Brain microvascular endothelial cell (primary cell): ENCODE measurements at regions of chr5 and their contacts with region 1.

Region 1: GRCh38 chr5:78648359-78649210 is at the start of gene LHFPL2:
- DNase-seq: peak; percentile 57
- H3K4me3 ChIP-seq: peak within 1 kb of the TSS; percentile 93
- H3K27ac ChIP-seq: peak within 1 kb of the TSS; percentile 92
- H3K27me3 ChIP-seq: no peaks in the 10 kb centered on the region
- CTCF ChIP-seq: no peak

Region 2: DNA sequence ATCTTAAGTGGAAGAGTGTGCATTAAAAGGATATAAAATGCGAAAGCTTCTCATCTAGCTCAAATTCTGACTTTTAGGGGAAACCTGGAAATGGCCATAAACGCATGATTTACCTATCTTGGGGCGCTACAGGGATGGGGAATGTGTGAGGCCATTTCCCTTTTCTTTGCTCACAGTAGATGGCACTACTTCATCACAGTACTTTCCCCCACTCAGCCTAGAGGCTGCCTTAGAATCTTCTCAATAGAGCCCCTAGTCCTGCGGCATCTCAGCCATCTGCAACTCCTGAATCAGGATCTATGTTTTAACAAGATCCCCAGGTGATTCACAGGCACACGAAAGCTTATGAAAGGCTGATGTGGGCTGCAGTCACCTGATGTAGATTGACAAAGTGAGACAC is 110.8 kb before region 1 on chr5:
- in situ Hi-C with region 1: loop called (anchors 25 kb)
- DNase-seq: peak; percentile 58
- H3K4me3 ChIP-seq: no peak overlapping the region
- H3K27ac ChIP-seq: no peak overlapping the region
- H3K27me3 ChIP-seq: no peaks in the 10 kb centered on the region
- CTCF ChIP-seq: peak; percentile 68